ENCODE measurements at regions of chr20 and their contacts with region 1.

Region 1: DNA sequence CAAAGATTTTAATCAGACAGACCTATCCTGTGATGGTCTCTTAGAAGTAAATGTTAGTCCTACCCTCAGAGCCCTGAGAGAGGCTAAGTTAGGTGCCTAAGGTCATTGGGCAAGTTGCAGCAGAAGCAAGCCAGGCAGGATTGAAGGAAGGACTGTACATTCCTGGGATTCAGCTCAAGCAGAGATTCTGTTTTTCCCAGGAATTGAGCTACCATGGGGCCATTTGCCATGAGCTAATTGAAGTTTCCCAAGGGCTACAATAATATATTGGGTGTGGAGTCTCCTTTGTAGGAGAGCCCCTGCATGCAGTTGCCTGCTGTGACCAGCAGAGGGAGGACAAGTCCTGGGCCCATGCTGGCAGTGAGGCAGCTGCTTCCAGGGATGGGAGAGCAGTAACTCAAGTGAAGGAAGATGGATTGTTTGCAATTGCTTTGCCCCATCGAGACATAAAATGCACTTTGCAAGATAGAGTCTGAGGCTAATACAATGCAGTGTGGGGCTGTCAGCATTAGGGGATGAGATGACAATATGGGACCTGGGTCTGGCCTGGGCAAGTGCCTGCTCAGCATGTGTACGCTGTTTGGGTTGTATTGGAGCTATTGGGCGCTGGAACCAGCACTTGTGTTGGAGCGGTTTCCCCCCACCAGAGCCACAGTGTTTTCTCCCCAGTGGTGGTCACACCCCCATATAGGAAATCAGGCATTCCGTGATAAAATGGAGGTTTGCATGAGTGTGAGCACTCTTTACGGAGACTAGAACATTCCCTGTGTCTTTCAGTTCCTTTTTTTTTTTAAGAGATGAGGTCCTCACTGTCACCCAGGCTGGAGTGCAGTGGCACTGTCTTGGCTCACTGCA is 27.9 kb downstream of the DNMT3B start:
- DNase-seq: peak; percentile 86
- H3K4me3 Mint-ChIP-seq: no peak overlapping the region
- H3K27ac Mint-ChIP-seq: no peak overlapping the region
- H3K4me1 Mint-ChIP-seq: peaks cover 28% of the 10 kb centered on the region
- H3K27me3 Mint-ChIP-seq: no peaks in the 10 kb centered on the region

Region 2: GRCh38 chr20:32819992-32820710 is 30.0 kb after region 1 on chr20:
- CTCF ChIA-PET with region 1: interaction called, 7 read pairs
- intact Hi-C with region 1: loop called (anchors 1 kb)
- DNase-seq: peak; percentile 76
- H3K4me3 Mint-ChIP-seq: peak overlapping the region; percentile 97
- H3K27ac Mint-ChIP-seq: peak overlapping the region; percentile 94
- H3K4me1 Mint-ChIP-seq: peaks cover 35% of the 10 kb centered on the region
- H3K27me3 Mint-ChIP-seq: no peaks in the 10 kb centered on the region

Region 3: DNA sequence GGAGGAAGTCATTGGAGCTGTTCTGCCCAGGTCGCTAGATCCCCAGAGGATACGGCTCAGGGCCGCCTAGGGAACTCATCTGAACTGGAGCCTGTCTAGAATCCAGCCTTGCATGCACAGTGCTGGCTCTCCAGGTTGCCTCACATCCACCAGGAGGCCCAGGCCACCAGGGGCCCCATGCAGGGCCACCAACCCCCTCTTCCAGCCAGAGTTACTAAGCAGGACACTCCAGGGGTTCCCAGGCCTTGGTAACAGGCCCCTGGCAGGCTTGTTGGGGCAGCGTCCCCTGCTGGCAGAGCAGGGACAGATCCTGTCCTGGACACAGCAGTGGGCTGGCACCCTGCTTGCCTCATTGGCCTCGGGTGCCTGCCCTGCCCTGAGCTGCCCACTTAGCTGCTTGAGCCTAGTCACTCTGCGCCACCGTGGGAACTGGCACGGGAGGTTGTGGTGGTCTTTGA is 103.9 kb after region 1 on chr20:
- CTCF ChIA-PET with region 1: interaction called, 9 read pairs
- intact Hi-C with region 1: loop called (anchors 1 kb)
- DNase-seq: peak; percentile 41
- H3K4me3 Mint-ChIP-seq: no peak overlapping the region
- H3K27ac Mint-ChIP-seq: no peak overlapping the region
- H3K4me1 Mint-ChIP-seq: peaks cover 4% of the 10 kb centered on the region
- H3K27me3 Mint-ChIP-seq: no peaks in the 10 kb centered on the region

Region 4: DNA sequence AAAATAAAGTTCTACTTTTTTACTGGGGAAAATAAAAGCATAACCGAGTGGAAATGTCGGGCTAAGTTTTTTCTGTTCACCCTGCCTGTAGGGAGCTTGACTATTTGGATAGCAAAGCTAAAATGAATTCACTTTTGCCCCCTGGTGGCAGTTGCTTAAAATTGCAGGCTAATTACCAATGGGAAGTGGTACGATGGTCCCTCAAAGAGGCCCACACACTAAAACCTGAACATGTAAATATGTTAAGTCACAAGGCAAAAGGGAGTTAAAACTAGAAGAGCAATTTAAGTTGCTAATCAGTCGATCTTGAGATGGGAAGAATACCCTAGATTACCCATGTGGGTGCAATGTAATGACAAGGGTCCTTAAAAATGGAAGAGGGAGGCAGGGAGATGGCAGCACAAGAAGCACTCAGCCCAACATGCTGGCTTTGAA is 215.0 kb after region 1 on chr20:
- CTCF ChIA-PET with region 1: interaction called, 7 read pairs
- intact Hi-C with region 1: loop called (anchors 1 kb)
- DNase-seq: peak; percentile 60
- H3K4me3 Mint-ChIP-seq: no peak overlapping the region
- H3K27ac Mint-ChIP-seq: no peak overlapping the region
- H3K4me1 Mint-ChIP-seq: peaks cover 24% of the 10 kb centered on the region
- H3K27me3 Mint-ChIP-seq: no peaks in the 10 kb centered on the region

Region 5: DNA sequence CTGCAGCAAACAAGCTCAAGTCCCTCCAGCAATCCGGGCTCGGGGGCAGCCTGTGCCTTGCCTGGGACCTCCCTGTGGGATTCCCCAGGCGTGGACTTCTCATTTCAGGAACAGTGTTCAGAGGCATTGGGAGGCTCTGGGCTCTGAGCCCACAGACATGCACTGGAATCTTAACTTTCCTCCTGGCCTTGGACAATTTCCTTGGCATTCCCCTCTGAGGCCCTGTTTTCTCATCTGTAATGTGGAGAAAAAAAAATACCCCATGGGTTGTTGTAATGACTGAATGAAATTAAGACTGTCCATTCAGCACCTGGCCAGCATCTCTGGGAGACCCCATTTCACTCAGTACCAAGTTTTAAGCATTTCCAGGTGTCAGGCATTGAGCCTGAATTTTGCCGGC is 306.9 kb after region 1 on chr20:
- CTCF ChIA-PET with region 1: interaction called, 6 read pairs
- intact Hi-C with region 1: loop called (anchors 1 kb)
- DNase-seq: no peak
- H3K4me3 Mint-ChIP-seq: no peak overlapping the region
- H3K27ac Mint-ChIP-seq: no peak overlapping the region
- H3K4me1 Mint-ChIP-seq: peaks cover 2% of the 10 kb centered on the region
- H3K27me3 Mint-ChIP-seq: no peaks in the 10 kb centered on the region

Region 6: GRCh38 chr20:33291830-33292355 is 501.8 kb after region 1 on chr20:
- CTCF ChIA-PET with region 1: interaction called, 5 read pairs
- intact Hi-C with region 1: loop called (anchors 1 kb)
- DNase-seq: peak; percentile 75
- H3K4me3 Mint-ChIP-seq: no peak overlapping the region
- H3K27ac Mint-ChIP-seq: no peak overlapping the region
- H3K4me1 Mint-ChIP-seq: no peaks in the 10 kb centered on the region
- H3K27me3 Mint-ChIP-seq: no peaks in the 10 kb centered on the region